ENCODE measurements at regions of chr1 and their contacts with region 1.

Region 1: GRCh38 chr1:45011837-45012638 is at the start of gene UROD:
- DNase-seq: peak; percentile 97
- H3K4me3 ChIP-seq: peak within 1 kb of the TSS; percentile 70 to 94 (median 79)
- H3K27ac ChIP-seq: peak within 1 kb of the TSS; percentile 88
- H3K4me1 ChIP-seq: peaks cover 28% of the 10 kb centered on the region
- H3K27me3 ChIP-seq: no peaks in the 10 kb centered on the region
- CTCF ChIP-seq: no peak
- POLR2A ChIP-seq: peak; percentile 98
- total RNA-seq, gene UROD: 187 and 192 TPM in 2 replicates

Region 2: GRCh38 chr1:44730741-44731512 is 281.1 kb before region 1 on chr1 and contains the start of gene RNU5D-1:
- CTCF ChIA-PET with region 1: interaction called, 3 read pairs
- POLR2A ChIA-PET with region 1: no interaction called
- dilution Hi-C with region 1: no loop called
- intact Hi-C with region 1: loop called (anchors 5 kb)
- DNase-seq: peak; percentile 97
- H3K4me3 ChIP-seq: no peak within 1 kb of the TSS
- H3K27ac ChIP-seq: peak within 1 kb of the TSS; percentile 89
- H3K4me1 ChIP-seq: peaks cover 2% of the 10 kb centered on the region
- H3K27me3 ChIP-seq: no peaks in the 10 kb centered on the region
- CTCF ChIP-seq: peak; percentile 77 to 84
- POLR2A ChIP-seq: peak; percentile 100
- total RNA-seq, gene RNU5D-1: not detected in 2 replicates

Region 3: GRCh38 chr1:44799770-44800584 is 212.1 kb before region 1 on chr1 and contains the start of gene PLK3:
- CTCF ChIA-PET with region 1: interaction called, 5 read pairs
- POLR2A ChIA-PET with region 1: interaction called, 11 read pairs
- dilution Hi-C with region 1: no loop called
- intact Hi-C with region 1: no loop called
- DNase-seq: peak; percentile 98
- H3K4me3 ChIP-seq: peak within 1 kb of the TSS; percentile 68 to 75 (median 69)
- H3K27ac ChIP-seq: peak within 1 kb of the TSS; percentile 87
- H3K4me1 ChIP-seq: peaks cover 22% of the 10 kb centered on the region
- H3K27me3 ChIP-seq: no peaks in the 10 kb centered on the region
- CTCF ChIP-seq: peak; percentile 93 to 96
- POLR2A ChIP-seq: peak; percentile 100
- total RNA-seq, gene PLK3: 55.0 and 60.0 TPM in 2 replicates

Region 4: DNA sequence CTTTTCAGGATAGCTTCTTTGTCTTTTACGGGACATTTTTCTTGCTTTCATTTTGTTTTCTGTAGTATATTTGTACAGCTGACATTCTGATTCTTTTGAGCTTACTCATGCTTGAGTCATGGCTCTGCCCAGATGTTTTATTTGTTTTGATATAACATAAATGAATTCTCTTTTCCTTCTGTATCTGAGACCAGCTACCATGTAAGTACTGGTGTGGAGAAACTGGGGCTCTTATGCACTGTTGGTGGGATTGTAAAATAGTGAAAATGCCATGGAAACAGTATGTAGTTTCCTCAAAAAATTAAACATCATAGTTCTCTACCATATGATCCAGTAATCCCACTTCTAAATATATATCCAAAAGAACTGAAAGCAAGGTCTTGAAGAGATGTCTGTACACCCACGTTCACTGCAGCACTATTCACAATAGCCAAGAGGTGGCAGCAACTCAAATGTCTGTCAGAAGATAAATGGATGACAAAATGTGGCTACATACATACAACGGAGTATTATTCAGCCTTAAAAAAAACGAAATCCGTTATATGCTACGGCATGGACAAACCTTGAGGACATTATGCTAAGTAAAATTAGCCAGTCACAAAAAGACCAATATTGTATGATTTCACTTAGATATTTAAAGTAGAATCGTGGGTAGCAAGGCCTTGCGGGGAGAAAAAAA is 87.1 kb before region 1 on chr1:
- CTCF ChIA-PET with region 1: interaction called, 52 read pairs
- POLR2A ChIA-PET with region 1: no interaction called
- dilution Hi-C with region 1: no loop called
- intact Hi-C with region 1: loop called (anchors 1 kb)
- DNase-seq: peak; percentile 93
- H3K4me3 ChIP-seq: peak overlapping the region in 2 of 3 experiments; percentile 11 to 61
- H3K27ac ChIP-seq: peak overlapping the region; percentile 87
- H3K4me1 ChIP-seq: peaks cover 18% of the 10 kb centered on the region
- H3K27me3 ChIP-seq: no peaks in the 10 kb centered on the region
- CTCF ChIP-seq: peak; percentile 32 to 54
- POLR2A ChIP-seq: no peak

Region 5: GRCh38 chr1:45205910-45206721 is 194.1 kb after region 1 on chr1 and contains the start of gene ZSWIM5:
- CTCF ChIA-PET with region 1: no interaction called
- POLR2A ChIA-PET with region 1: no interaction called
- dilution Hi-C with region 1: no loop called
- intact Hi-C with region 1: loop called (anchors 10 kb)
- DNase-seq: peak; percentile 65
- H3K4me3 ChIP-seq: peak within 1 kb of the TSS; percentile 53 to 96 (median 72)
- H3K27ac ChIP-seq: no peak within 1 kb of the TSS
- H3K4me1 ChIP-seq: peaks cover 9% of the 10 kb centered on the region
- H3K27me3 ChIP-seq: no peaks in the 10 kb centered on the region
- CTCF ChIP-seq: no peak
- POLR2A ChIP-seq: no peak
- total RNA-seq, gene ZSWIM5: 1.6 and 1.7 TPM in 2 replicates

Region 6: DNA sequence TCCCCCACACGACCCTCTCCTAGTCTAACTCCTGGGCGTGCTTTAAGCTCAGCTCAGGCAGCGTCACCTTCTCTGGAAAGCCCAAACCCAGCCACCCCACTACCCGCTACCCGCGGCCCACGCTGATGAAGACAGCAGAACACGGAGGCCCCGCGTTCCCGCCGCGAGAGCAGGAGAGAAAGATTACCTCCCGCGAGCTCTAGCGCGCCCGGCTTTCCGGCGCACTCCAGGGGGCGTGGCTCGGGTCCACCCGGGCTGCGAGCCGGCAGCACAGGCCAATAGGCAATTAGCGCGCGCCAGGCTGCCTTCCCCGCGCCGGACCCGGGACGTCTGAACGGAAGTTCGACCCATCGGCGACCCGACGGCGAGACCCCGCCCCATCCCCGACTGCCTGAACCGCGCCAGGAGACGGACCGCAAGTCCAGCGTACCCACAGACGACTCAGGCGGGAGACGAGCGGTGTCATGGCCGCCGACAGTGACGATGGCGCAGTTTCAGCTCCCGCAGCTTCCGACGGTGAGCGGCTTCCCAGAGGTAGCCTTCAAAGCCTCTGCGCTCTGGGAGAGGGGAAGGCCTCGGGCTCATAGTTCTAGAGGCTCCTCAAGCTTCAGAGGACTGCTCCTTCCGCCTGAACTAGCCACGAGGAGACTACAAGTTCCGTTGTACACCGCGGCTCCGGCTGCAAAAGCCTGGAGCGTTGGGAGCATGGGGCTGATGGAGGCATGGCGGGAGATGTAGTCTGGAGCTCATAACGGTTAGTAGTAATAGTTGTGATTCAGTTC is 327.9 kb after region 1 on chr1 and contains the starts of genes MUTYH and TOE1:
- CTCF ChIA-PET with region 1: interaction called, 35 read pairs
- POLR2A ChIA-PET with region 1: interaction called, 11 read pairs
- dilution Hi-C with region 1: no loop called
- intact Hi-C with region 1: loop called (anchors 1 kb)
- DNase-seq: peak; percentile 94
- H3K4me3 ChIP-seq: peak within 1 kb of the TSS; percentile 48 to 82 (median 56)
- H3K27ac ChIP-seq: peak within 1 kb of the TSS; percentile 85
- H3K4me1 ChIP-seq: peaks cover 22% of the 10 kb centered on the region
- H3K27me3 ChIP-seq: no peaks in the 10 kb centered on the region
- CTCF ChIP-seq: no peak
- POLR2A ChIP-seq: peak; percentile 72
- total RNA-seq, gene MUTYH: 14.3 and 16.6 TPM in 2 replicates
- total RNA-seq, gene TOE1: 15.8 and 16.3 TPM in 2 replicates

Region 7: DNA sequence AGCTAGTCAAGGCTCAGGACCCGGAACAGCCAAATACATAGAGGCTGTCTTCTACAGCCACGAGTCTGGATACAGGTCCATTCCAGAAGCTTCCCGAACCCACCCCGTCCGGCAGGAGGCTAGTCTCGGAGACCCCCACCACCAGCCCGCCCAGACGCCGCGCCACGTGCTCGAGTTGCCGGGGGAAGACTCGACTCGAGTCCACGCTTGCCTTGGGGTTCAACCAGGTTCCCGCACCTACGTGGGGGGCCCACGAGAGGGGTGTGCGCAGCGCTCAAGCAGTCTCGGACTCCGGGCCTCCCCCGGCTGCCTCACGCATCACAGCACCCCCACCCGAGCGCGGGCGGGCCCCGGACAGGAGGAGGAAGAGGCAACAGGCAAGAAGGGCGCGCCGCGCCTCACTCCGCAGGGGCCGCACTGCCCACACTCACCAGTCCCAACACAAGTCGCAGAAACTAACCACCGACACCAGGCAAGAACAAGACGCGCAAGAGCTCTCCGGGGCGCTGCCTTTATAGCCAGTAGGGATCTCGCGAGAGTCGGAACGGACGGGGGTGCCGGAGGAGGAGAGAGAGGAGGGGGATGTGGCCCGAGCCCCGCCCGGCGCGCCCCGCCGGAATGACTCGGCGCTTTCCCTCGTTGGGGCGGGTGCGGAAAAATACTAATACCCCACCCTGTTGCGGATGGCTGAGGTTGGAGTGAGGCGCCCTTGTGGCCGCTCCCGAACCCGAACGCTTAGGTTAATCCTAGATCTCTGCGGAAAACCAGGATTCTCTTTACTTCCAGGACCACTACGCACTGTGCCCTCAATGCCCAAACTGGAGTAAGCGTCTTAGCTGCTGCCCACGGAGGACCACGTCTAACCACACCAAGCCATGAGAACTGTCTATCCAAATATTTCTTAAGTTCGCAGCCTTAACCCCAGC is 509.6 kb after region 1 on chr1 and contains the start of gene PRDX1:
- CTCF ChIA-PET with region 1: interaction called, 3 read pairs
- POLR2A ChIA-PET with region 1: interaction called, 11 read pairs
- dilution Hi-C with region 1: no loop called
- intact Hi-C with region 1: no loop called
- DNase-seq: peak; percentile 96
- H3K4me3 ChIP-seq: peak within 1 kb of the TSS; percentile 79 to 86 (median 80)
- H3K27ac ChIP-seq: peak within 1 kb of the TSS; percentile 87
- H3K4me1 ChIP-seq: peaks cover 19% of the 10 kb centered on the region
- H3K27me3 ChIP-seq: no peaks in the 10 kb centered on the region
- CTCF ChIP-seq: no peak
- POLR2A ChIP-seq: peak; percentile 100
- total RNA-seq, gene PRDX1: 681 and 685 TPM in 2 replicates